ENCODE measurements at regions of chr1 and their contacts with region 1.

Region 1: GRCh38 chr1:87953732-87954344 is 625.2 kb downstream of the LMO4 start:
- DNase-seq: peak; percentile 27 to 66
- ATAC-seq: peak; percentile 39 to 83 (median 72)
- H3K4me3 ChIP-seq: no peak overlapping the region
- H3K27ac ChIP-seq: no peak overlapping the region
- H3K4me1 ChIP-seq: peaks cover 0 to 24% (median 0%) of the 10 kb centered on the region in 9 donors
- H3K27me3 ChIP-seq: no peaks in the 10 kb centered on the region
- CTCF ChIP-seq: peak; percentile 50 to 89 (median 82)

Region 2: DNA sequence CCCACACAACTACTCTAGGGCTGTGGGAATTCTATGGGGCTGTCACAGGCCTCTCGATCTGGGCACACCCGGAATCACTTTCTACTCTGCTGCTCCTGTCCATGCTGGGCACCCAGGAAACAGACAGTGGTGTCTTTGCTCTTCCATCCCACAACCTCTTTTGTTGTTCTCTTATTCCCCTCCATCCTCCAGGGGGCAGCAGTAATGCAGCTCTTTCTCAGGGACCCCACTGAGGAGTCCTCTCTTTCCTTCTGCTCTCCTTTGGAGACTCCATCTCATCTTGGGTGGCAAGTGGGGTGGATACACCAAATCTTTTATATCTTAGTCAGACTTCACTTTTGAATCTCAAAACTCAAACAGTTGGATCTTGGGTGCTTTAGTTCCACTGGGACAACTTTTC is 833.1 kb before region 1 on chr1:
- intact Hi-C with region 1: loop called in 1 of 10 experiments (anchors 10 kb)
- DNase-seq: no peak
- ATAC-seq: no peak
- H3K4me3 ChIP-seq: no peak overlapping the region
- H3K27ac ChIP-seq: no peak overlapping the region
- H3K4me1 ChIP-seq: no peaks in the 10 kb centered on the region
- H3K27me3 ChIP-seq: no peaks in the 10 kb centered on the region
- CTCF ChIP-seq: no peak

Region 3: DNA sequence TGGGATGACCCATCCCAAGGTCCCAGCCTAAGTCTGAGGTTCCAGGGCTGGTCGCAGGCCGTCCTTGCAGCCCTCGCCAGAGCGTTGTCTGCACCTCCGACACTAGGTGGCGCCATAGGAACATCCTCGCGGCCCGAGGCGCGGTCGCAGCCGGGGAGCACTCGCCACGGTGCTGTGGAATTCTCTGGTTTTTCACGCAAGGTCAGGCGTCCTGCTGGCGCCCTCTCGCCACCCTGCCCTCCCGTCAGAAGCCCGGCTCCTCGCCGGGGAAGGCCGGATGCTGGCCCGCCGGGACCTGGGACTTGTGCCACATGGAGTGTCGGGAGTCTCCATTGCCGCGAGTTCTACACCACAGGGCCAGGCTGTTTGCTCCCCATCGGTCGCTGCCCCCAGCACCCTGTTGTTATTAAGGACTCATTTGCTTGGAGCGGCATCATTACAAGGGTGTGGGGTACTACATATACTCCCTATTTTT is 822.0 kb before region 1 on chr1:
- intact Hi-C with region 1: loop called in 8 of 10 experiments (anchors 2 to 10 kb)
- DNase-seq: peak; percentile 81 to 84
- ATAC-seq: peak; percentile 87 to 95 (median 91)
- H3K4me3 ChIP-seq: peak overlapping the region; percentile 21 to 63 (median 50)
- H3K27ac ChIP-seq: peak overlapping the region; percentile 5 to 85 (median 68)
- H3K4me1 ChIP-seq: peaks cover 0 to 52% (median 22%) of the 10 kb centered on the region in 9 donors
- H3K27me3 ChIP-seq: peaks cover 0 to 9% (median 0%) of the 10 kb centered on the region in 7 donors
- CTCF ChIP-seq: peak; percentile 85 to 97 (median 93)

Region 4: GRCh38 chr1:87151500-87152421 is 802.1 kb before region 1 on chr1:
- intact Hi-C with region 1: loop called in 2 of 10 experiments (anchors 5 kb)
- DNase-seq: peak; percentile 78 to 80
- ATAC-seq: peak; percentile 90 to 97 (median 94)
- H3K4me3 ChIP-seq: peak overlapping the region; percentile 6 to 45 (median 38)
- H3K27ac ChIP-seq: peak overlapping the region in 9 of 10 donors; percentile 3 to 71 (median 59)
- H3K4me1 ChIP-seq: peaks cover 2 to 44% (median 23%) of the 10 kb centered on the region in 9 donors
- H3K27me3 ChIP-seq: no peaks in the 10 kb centered on the region
- CTCF ChIP-seq: peak in 8 of 9 donors; percentile 43 to 79 (median 64)